Sigmoid colon (tissue), 7 donors: ENCODE measurements at regions of chr1 and their contacts with region 1.

Region 1: GRCh38 chr1:162056043-162056442 is 13.4 kb upstream of the NOS1AP start:
- DNase-seq: peak; percentile 76
- H3K4me3 ChIP-seq: no peak overlapping the region
- H3K27ac ChIP-seq: no peak overlapping the region
- H3K4me1 ChIP-seq: peaks cover 0 to 6% (median 0%) of the 10 kb centered on the region in 4 donors
- H3K27me3 ChIP-seq: no peaks in the 10 kb centered on the region
- CTCF ChIP-seq: peak; percentile 75 to 90 (median 88)
- EP300 ChIP-seq: no peak
- POLR2A ChIP-seq: no peak

Region 2: GRCh38 chr1:162276493-162276892 is 220.4 kb after region 1 on chr1:
- intact Hi-C with region 1: loop called (anchors 1 kb)
- DNase-seq: no peak
- H3K4me3 ChIP-seq: no peak overlapping the region
- H3K27ac ChIP-seq: no peak overlapping the region
- H3K4me1 ChIP-seq: peaks cover 0 to 5% (median 0%) of the 10 kb centered on the region in 4 donors
- H3K27me3 ChIP-seq: no peaks in the 10 kb centered on the region
- CTCF ChIP-seq: peak in 3 of 4 experiments; percentile 15 to 34 (median 21)
- EP300 ChIP-seq: no peak
- POLR2A ChIP-seq: no peak

Region 3: GRCh38 chr1:162391790-162392563 is 335.9 kb after region 1 on chr1:
- intact Hi-C with region 1: loop called (anchors 2 kb)
- DNase-seq: no peak
- H3K4me3 ChIP-seq: no peak overlapping the region
- H3K27ac ChIP-seq: no peak overlapping the region
- H3K4me1 ChIP-seq: peaks cover 0 to 3% (median 0%) of the 10 kb centered on the region in 4 donors
- H3K27me3 ChIP-seq: peaks cover 0 to 6% (median 0%) of the 10 kb centered on the region in 3 donors
- CTCF ChIP-seq: peak; percentile 72 to 94 (median 87)
- EP300 ChIP-seq: no peak
- POLR2A ChIP-seq: no peak

Region 4: GRCh38 chr1:162587347-162587746 is 531.3 kb after region 1 on chr1:
- intact Hi-C with region 1: no loop called
- DNase-seq: no peak
- H3K4me3 ChIP-seq: no peak overlapping the region
- H3K27ac ChIP-seq: no peak overlapping the region
- H3K4me1 ChIP-seq: no peaks in the 10 kb centered on the region
- H3K27me3 ChIP-seq: no peaks in the 10 kb centered on the region
- CTCF ChIP-seq: no peak
- EP300 ChIP-seq: no peak
- POLR2A ChIP-seq: no peak